Sigmoid colon (tissue), 7 donors: ENCODE measurements at regions of chr2 and their contacts with region 1.

Region 1: GRCh38 chr2:63692002-63692606 is 103.3 kb downstream of the MDH1 start:
- DNase-seq: no peak
- H3K4me3 ChIP-seq: no peak overlapping the region
- H3K27ac ChIP-seq: no peak overlapping the region
- H3K4me1 ChIP-seq: no peaks in the 10 kb centered on the region
- H3K27me3 ChIP-seq: no peaks in the 10 kb centered on the region
- CTCF ChIP-seq: peak in 2 of 4 experiments; percentile 37 to 40
- EP300 ChIP-seq: no peak
- POLR2A ChIP-seq: no peak

Region 2: GRCh38 chr2:63862806-63863205 is 170.7 kb after region 1 on chr2:
- intact Hi-C with region 1: loop called (anchors 1 kb)
- DNase-seq: no peak
- H3K4me3 ChIP-seq: no peak overlapping the region
- H3K27ac ChIP-seq: peak overlapping the region in 2 of 4 donors; percentile 15 to 20
- H3K4me1 ChIP-seq: peaks cover 0 to 42% (median 21%) of the 10 kb centered on the region in 4 donors
- H3K27me3 ChIP-seq: no peaks in the 10 kb centered on the region
- CTCF ChIP-seq: no peak
- EP300 ChIP-seq: no peak
- POLR2A ChIP-seq: no peak